SK-N-SH (cell line): ENCODE measurements at regions of chr3 and their contacts with region 1.

Region 1: DNA sequence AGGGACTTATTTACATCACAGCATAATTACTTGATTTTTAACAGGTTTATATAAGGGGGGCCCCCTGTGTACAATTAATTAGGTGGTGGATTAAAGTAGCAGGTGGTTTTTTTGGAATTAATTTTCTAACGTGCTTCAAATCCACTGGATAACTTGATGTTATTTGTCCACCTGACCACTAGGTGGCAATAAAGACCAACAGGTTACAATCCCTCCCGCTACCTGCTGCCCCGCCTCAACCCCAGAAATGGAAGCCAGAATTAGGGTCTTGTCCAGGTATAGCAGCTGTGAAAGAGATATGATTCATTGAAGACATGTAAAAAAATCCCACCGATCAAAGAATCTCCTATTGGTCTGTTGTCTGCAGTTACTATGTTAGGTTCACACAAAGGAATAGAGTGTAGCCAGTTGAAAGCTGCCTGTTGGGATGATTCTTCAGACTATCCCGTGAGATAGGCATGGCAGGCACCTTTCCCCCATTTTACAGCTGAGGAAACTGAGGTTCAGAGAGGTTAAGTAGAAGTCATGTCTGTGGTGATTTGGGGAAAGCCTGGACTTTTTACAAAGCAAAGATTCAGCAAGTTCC is 44.0 kb downstream of the MFSD1 start:
- DNase-seq: peak; percentile 68
- H3K4me3 ChIP-seq: no peak overlapping the region
- H3K27ac ChIP-seq: no peak overlapping the region
- H3K4me1 ChIP-seq: peaks cover 3 to 9% of the 10 kb centered on the region in 2 experiments; a peak in 2 of 4 replicates
- H3K27me3 ChIP-seq: no peaks in the 10 kb centered on the region
- CTCF ChIP-seq: peak; percentile 84
- EP300 ChIP-seq: no peak
- RAD21 ChIP-seq: peak; percentile 90

Region 2: GRCh38 chr3:158420654-158421396 is 425.0 kb before region 1 on chr3:
- CTCF ChIA-PET with region 1: no interaction called
- POLR2A ChIA-PET with region 1: no interaction called
- DNase-seq: no peak
- H3K4me3 ChIP-seq: no peak overlapping the region
- H3K27ac ChIP-seq: no peak overlapping the region
- H3K4me1 ChIP-seq: no peaks in the 10 kb centered on the region
- H3K27me3 ChIP-seq: no peaks in the 10 kb centered on the region
- CTCF ChIP-seq: no peak
- EP300 ChIP-seq: no peak
- RAD21 ChIP-seq: no peak

Region 3: DNA sequence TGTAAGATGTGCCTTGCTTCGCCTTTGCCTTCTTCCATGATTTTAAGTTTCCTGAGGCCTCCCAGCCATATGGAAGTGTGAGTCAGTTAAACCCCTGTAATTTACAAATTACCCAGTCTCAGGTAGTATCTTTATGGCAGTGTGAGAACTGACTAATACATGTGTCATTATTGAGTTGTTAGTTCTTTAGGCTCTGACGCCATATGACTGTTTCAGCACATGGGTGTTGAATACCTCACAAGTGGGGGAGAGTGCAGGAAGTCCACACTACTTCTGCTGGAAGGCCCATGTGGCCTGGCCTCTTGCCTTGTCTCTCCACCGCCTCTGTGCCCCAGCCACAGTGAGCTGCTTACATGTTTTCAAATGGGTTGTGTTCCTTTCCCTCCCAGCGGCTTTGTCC is 15.5 kb before region 1 on chr3:
- CTCF ChIA-PET with region 1: interaction called, 21 read pairs
- POLR2A ChIA-PET with region 1: interaction called, 4 read pairs
- DNase-seq: no peak
- H3K4me3 ChIP-seq: no peak overlapping the region
- H3K27ac ChIP-seq: no peak overlapping the region
- H3K4me1 ChIP-seq: no peaks in the 10 kb centered on the region
- H3K27me3 ChIP-seq: no peaks in the 10 kb centered on the region
- CTCF ChIP-seq: no peak
- EP300 ChIP-seq: no peak
- RAD21 ChIP-seq: no peak

Region 4: GRCh38 chr3:158863247-158863646 is 17.4 kb after region 1 on chr3:
- CTCF ChIA-PET with region 1: interaction called, 28 read pairs
- POLR2A ChIA-PET with region 1: no interaction called
- DNase-seq: no peak
- H3K4me3 ChIP-seq: no peak overlapping the region
- H3K27ac ChIP-seq: no peak overlapping the region
- H3K4me1 ChIP-seq: no peaks in the 10 kb centered on the region
- H3K27me3 ChIP-seq: no peaks in the 10 kb centered on the region
- CTCF ChIP-seq: no peak
- EP300 ChIP-seq: no peak
- RAD21 ChIP-seq: no peak

Region 5: GRCh38 chr3:158912188-158912587 is 66.3 kb after region 1 on chr3:
- CTCF ChIA-PET with region 1: interaction called, 20 read pairs
- POLR2A ChIA-PET with region 1: no interaction called
- DNase-seq: no peak
- H3K4me3 ChIP-seq: no peak overlapping the region
- H3K27ac ChIP-seq: no peak overlapping the region
- H3K4me1 ChIP-seq: peaks cover 0 to 2% of the 10 kb centered on the region in 2 experiments; a peak in 1 of 4 replicates
- H3K27me3 ChIP-seq: no peaks in the 10 kb centered on the region
- CTCF ChIP-seq: peak; percentile 33; the same call in 1 of the 2 replicates
- EP300 ChIP-seq: no peak
- RAD21 ChIP-seq: no peak

Region 6: GRCh38 chr3:158918008-158918407 is 72.2 kb after region 1 on chr3:
- CTCF ChIA-PET with region 1: interaction called, 20 read pairs
- POLR2A ChIA-PET with region 1: no interaction called
- DNase-seq: peak; percentile 58
- H3K4me3 ChIP-seq: no peak overlapping the region
- H3K27ac ChIP-seq: no peak overlapping the region; a peak in 1 of 4 replicates
- H3K4me1 ChIP-seq: peaks cover 0 to 10% of the 10 kb centered on the region in 2 experiments; a peak in 2 of 4 replicates
- H3K27me3 ChIP-seq: no peaks in the 10 kb centered on the region
- CTCF ChIP-seq: peak; percentile 83
- EP300 ChIP-seq: 0 out of 4 replicates have a peak, but pooled peaks of 1 of the 2 experiments have one; percentile 17
- RAD21 ChIP-seq: peak; percentile 83

Region 7: DNA sequence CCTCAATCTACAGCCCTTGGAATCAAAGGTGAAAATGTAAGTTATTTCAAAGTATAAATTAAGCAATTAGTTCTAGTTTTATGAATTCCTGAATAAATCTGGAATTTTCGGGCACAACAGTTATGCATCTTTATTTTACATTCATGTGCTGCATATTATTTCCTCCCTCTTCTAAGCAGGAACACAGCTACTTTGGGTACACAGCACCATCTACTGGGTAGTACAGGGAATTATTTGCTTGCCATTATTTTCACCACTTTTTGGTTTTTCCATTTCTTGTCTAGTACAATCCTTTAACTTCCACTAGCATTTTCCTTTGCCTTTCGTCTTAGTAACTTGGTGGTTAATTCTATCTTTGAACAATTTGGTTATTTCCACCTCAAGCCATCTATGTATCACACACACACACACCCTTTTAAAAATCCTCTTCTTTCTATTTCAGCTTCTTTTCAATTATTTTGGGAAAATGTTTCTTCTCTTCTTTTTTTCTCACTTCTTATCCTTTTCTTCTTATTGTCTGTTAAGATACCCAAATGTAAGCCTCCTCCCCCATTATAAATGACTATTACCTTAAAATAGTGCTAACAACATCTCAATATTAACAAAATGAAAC is 407.0 kb after region 1 on chr3:
- CTCF ChIA-PET with region 1: interaction called, 322 read pairs
- POLR2A ChIA-PET with region 1: no interaction called
- DNase-seq: peak; percentile 36
- H3K4me3 ChIP-seq: peak overlapping the region in 1 of 2 experiments; percentile 14; a peak in 1 of 4 replicates
- H3K27ac ChIP-seq: peak overlapping the region; percentile 50 to 83; a peak in 3 of 4 replicates
- H3K4me1 ChIP-seq: peaks cover 0 to 24% of the 10 kb centered on the region in 2 experiments; a peak in 2 of 4 replicates
- H3K27me3 ChIP-seq: no peaks in the 10 kb centered on the region
- CTCF ChIP-seq: peak; percentile 93
- EP300 ChIP-seq: no peak
- RAD21 ChIP-seq: peak; percentile 83

Region 8: DNA sequence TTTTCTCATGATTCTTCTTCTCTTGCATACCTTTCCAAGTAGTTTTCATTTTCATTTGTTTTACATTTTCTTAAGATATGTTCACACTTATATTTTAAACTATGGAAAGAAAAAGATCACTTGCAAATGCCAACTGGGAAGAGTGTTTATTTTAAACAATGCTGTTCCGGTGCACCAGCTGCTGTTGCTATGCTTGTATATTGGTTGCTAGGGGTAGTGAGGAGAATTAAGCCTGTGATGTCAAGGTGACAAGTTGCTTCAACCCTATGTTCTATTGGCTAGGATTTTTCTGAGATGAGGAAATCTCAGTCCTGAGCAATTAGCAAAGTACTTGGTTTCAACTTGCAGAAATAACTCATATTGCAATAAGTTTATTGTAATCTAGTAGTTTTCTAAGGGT is 456.1 kb after region 1 on chr3:
- CTCF ChIA-PET with region 1: no interaction called
- POLR2A ChIA-PET with region 1: no interaction called
- DNase-seq: no peak
- H3K4me3 ChIP-seq: no peak overlapping the region
- H3K27ac ChIP-seq: no peak overlapping the region
- H3K4me1 ChIP-seq: no peaks in the 10 kb centered on the region; a peak in 2 of 4 replicates
- H3K27me3 ChIP-seq: no peaks in the 10 kb centered on the region; the same call in 1 of the 2 replicates
- CTCF ChIP-seq: no peak
- EP300 ChIP-seq: no peak
- RAD21 ChIP-seq: no peak